A673 (cell line): ENCODE measurements at regions of chr15 and their contacts with region 1.

Region 1: DNA sequence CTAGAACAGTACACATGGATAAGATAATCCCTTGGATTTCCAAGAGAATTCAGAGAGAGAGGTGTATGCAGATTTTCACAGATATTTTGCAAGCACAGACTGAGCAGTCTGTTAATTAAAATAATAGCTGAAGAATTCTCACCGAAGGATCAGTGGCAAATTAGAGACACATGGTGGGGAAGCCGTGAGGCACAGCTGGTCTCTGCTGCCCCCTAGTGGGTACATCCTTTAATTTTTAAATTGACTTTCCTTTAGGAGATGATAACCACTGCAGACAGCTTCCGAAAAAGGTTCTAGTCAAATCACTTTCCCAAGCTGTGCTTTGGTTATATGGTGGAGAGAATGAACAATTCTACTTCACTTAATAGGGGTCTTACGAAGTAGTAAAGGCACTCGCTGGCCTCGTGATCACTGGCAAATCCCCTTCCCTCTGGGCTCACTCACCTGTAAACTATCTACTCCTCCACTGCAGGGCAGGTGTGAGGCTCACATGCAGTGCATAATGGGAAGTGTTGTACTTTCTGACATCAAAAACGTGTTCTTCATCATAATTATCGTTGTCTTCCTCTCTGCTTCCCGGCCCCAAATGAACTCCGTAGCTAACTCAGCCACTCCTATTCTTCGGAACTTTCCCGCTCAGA is 19.5 kb downstream of the MESD start:
- DNase-seq: peak; percentile 76
- H3K4me3 ChIP-seq: no peak overlapping the region
- H3K27ac ChIP-seq: no peak overlapping the region
- H3K4me1 ChIP-seq: peaks cover 3% of the 10 kb centered on the region
- H3K27me3 ChIP-seq: no peaks in the 10 kb centered on the region
- CTCF ChIP-seq: peak; percentile 78

Region 2: GRCh38 chr15:80404057-80404715 is 566.0 kb before region 1 on chr15 and contains the start of gene ARNT2:
- CTCF ChIA-PET with region 1: no interaction called
- POLR2A ChIA-PET with region 1: no interaction called
- intact Hi-C with region 1: no loop called
- DNase-seq: no peak
- H3K4me3 ChIP-seq: peak within 1 kb of the TSS; percentile 37
- H3K27ac ChIP-seq: no peak within 1 kb of the TSS
- H3K4me1 ChIP-seq: no peaks in the 10 kb centered on the region
- H3K27me3 ChIP-seq: peaks cover 61% of the 10 kb centered on the region
- CTCF ChIP-seq: no peak
- total RNA-seq, gene ARNT2: 1.4 and 2.1 TPM in 2 replicates

Region 3: DNA sequence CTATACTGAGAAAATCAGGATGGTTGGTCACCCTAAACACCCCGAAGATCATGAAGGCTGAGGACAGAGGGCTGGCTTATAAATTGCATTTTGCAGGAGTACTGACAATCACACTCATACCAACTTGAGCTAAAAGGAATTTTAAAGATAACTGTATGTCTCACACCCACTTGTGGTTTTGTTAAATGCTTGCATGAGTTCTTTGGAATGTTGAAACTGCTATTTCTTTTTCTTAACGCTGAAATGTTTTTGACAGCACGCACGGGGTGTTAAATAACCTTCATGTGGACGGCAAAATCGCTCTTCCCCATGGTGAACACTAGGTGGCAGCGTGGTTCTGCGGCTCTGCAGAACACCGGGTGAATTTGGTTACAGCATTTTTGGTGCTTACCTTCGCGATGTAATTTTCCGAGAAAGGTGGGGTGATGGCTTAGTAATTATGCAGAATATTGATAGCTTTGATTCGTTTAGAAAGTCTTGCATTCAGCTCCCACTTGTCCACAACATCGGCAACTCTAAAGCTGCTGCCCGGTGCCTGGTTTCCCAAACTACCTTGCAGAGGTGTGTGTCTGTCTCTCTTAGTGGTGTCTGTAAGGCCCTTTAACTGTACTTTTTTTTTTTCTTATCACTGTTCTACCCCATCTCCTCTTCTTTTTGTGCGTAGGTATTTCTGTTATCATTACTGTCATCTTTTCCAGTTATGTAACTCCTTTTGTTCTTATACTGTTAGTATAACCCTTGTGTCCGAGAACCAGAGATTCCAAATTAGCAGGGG is 514.3 kb before region 1 on chr15:
- CTCF ChIA-PET with region 1: interaction called, 6 read pairs
- POLR2A ChIA-PET with region 1: no interaction called
- intact Hi-C with region 1: loop called (anchors 5 kb)
- DNase-seq: peak; percentile 66
- H3K4me3 ChIP-seq: no peak overlapping the region
- H3K27ac ChIP-seq: no peak overlapping the region
- H3K4me1 ChIP-seq: no peaks in the 10 kb centered on the region
- H3K27me3 ChIP-seq: no peaks in the 10 kb centered on the region
- CTCF ChIP-seq: peak; percentile 93

Region 4: DNA sequence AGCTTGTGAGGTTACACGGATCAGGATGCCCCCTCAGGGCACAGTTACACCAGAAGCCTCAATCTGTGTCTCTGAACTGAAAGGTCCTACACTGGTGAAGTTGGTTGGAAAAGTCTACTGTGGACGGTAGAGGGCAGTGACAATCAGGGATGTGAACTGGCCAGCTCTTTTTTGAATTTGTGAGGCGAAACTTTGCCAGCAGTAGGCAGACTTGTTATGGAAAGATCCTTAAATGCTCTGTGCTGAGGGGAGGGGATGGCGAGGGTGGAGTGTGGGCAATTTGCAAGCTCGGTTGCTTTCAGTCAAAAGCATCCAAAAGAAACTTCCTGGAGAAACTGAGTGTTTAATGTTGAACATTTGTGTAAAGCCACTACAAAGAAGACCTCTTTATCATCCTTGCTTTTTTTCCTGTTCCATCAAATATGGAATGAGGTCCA is 402.4 kb before region 1 on chr15:
- CTCF ChIA-PET with region 1: no interaction called
- POLR2A ChIA-PET with region 1: no interaction called
- intact Hi-C with region 1: loop called (anchors 5 kb)
- DNase-seq: peak; percentile 75
- H3K4me3 ChIP-seq: no peak overlapping the region
- H3K27ac ChIP-seq: no peak overlapping the region
- H3K4me1 ChIP-seq: no peaks in the 10 kb centered on the region
- H3K27me3 ChIP-seq: no peaks in the 10 kb centered on the region
- CTCF ChIP-seq: peak; percentile 72

Region 5: DNA sequence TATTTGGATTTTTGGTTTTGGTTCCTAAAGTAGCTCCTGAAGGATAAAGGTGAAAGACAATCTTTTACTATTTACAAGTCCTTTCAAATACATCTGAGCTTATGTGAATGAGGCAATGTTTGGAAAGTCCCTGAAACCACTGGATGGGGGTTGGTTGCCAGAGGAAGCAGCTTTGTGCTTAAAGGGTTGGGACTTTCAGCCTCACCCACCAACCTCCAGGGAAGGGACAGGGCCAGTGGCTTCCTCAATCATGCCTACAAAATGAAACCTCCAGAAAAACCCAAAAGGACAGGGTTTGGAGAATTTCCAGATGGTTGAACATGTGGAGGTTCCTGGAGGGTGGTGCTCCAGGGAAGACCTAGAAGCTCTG is 295.9 kb before region 1 on chr15:
- CTCF ChIA-PET with region 1: no interaction called
- POLR2A ChIA-PET with region 1: no interaction called
- intact Hi-C with region 1: no loop called
- DNase-seq: no peak
- H3K4me3 ChIP-seq: no peak overlapping the region
- H3K27ac ChIP-seq: no peak overlapping the region
- H3K4me1 ChIP-seq: no peaks in the 10 kb centered on the region
- H3K27me3 ChIP-seq: no peaks in the 10 kb centered on the region
- CTCF ChIP-seq: no peak

Region 6: DNA sequence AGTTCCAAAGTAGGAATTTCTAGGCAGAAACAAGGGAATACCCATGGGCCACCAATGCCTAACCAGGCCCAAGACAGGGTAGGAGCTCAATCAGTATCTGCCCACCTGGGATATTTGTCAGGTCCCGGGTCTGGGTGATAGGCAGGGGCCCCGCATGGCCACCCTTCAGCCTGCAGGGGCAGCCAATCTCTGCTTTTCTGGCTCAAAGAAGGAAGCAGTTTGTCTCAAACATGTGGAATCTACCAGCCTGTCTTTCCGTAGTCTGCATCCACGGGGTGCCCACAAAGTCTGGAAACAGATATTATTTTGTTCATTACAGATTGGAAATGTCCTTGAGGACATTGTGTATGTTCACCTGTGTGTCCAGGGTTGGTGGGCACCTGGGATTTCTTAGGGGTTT is 134.8 kb before region 1 on chr15:
- CTCF ChIA-PET with region 1: no interaction called
- POLR2A ChIA-PET with region 1: no interaction called
- intact Hi-C with region 1: no loop called
- DNase-seq: no peak
- H3K4me3 ChIP-seq: no peak overlapping the region
- H3K27ac ChIP-seq: no peak overlapping the region
- H3K4me1 ChIP-seq: no peaks in the 10 kb centered on the region
- H3K27me3 ChIP-seq: no peaks in the 10 kb centered on the region
- CTCF ChIP-seq: no peak